ENCODE measurements at regions of chr13 and their contacts with region 1.

Region 1: DNA sequence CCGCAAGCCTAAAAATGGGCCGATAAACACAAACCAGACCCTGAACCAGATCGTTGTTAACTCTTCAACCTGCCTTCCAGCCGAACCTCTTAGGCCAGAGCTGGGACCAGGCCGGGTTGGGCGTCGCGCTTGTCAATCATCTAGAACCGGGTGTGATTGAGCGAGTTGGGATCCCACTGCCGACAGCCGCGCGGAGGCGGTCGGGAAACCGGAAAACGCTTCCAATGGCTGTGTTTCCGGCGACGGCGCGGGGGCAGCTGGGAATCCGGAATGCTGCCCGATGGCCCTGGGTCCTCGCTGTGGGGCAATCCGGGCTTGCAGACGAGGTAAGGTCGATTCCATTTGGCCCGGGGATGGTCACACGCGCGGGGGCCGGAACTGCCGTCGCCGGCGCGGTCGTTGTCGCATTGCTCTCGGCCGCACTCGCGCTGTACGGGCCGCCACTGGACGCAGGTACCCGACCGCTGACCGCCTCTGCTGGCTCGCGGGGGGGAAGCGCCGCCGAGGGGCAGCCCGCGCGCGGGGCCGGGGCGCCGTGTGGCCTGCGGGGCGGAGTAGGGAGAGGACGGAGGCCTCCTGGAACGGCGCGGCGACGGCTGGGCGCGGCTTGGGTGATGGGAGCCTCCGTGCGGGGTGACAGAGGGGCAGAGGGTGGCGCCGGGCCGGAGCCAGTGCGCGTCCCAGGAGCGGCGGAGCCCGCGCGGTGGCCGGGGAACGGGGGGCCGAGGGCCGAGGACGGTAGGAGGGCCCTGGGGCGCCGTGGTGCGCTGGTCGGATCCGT is at the start of gene NAXD:
- DNase-seq: peak; percentile 80
- H3K4me3 ChIP-seq: peak within 1 kb of the TSS; percentile 87
- H3K27ac ChIP-seq: peak within 1 kb of the TSS; percentile 35
- H3K4me1 ChIP-seq: peaks cover 14% of the 10 kb centered on the region
- CTCF ChIP-seq: no peak
- total RNA-seq, gene NAXD: 8.3 and 9.4 TPM in 2 replicates

Region 2: GRCh38 chr13:110471833-110472162 is 143.7 kb before region 1 on chr13:
- CTCF ChIA-PET with region 1: no interaction called
- POLR2A ChIA-PET with region 1: no interaction called
- intact Hi-C with region 1: loop called (anchors 5 kb)
- DNase-seq: peak; percentile 79
- H3K4me3 ChIP-seq: no peak overlapping the region
- H3K27ac ChIP-seq: peak overlapping the region; percentile 39
- H3K4me1 ChIP-seq: peaks cover 44% of the 10 kb centered on the region
- CTCF ChIP-seq: no peak

Region 3: DNA sequence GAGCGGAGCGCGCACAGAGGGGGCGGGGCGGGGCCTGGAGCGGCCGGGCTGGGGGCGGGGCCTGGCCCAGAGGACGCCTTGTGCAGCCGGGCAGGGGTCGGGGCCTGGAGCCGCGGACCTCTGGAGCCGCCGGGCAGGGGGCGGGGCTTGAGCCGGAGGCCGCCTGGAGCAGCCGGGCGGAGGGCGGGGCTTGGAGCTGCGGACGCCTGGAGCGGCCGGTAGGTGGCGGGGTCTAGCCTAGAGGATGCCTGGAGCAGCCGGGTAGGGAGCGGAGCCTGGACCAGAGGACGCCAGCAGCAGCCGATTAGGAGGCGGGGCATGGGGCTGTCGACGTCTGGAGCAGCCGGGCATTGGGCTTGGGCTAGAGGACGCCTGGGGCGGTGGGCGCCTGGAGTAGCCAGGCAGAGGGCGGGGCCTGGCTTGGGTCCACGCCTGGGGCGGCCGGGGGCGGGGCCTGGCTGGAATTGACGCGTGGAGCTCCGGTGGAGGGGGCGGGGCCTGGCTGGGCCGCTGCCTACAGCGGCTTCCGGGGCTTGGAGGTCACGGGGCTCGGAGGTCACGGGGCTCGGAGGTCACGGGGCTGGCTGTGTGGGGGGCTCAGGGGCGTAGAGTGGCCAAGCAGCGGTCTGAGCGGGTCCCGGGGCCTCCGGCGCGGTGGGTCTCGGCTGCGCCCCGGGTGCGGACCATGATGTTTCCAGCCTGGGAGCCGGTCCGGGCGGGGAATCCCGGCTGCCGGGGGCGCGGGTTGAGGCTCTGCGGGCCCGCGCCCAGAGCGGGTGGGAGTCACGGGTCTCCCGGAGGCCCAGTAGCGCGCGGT is 299.8 kb after region 1 on chr13 and contains the start of gene ANKRD10:
- CTCF ChIA-PET with region 1: no interaction called
- POLR2A ChIA-PET with region 1: no interaction called
- intact Hi-C with region 1: loop called (anchors 2 kb)
- DNase-seq: peak; percentile 89
- H3K4me3 ChIP-seq: peak within 1 kb of the TSS; percentile 98
- H3K27ac ChIP-seq: peak within 1 kb of the TSS; percentile 90
- H3K4me1 ChIP-seq: peaks cover 18% of the 10 kb centered on the region
- CTCF ChIP-seq: peak; percentile 66
- total RNA-seq, gene ANKRD10: 53.2 and 82.8 TPM in 2 replicates

Measured in OCI-LY7 (cell line).